Activated T-helper 1 cell treated with anti-CD3 and anti-CD28 coated beads, Interleukin-12 subunit alpha, Interleukin-12 subunit beta, Interleukin-2, Interleukin-4 antibody, amounts not matched to agents 30 ng/mL and 10 ng/mL and 1 ng/mL, durations not matched to agents 14 hours and 24 hours and 36 hours (primary cell): ENCODE measurements at regions of chr20 and their contacts with region 1.

Region 1: GRCh38 chr20:32091888-32092346 is 17.6 kb upstream of the TM9SF4 start:
- DNase-seq: peak; percentile 57
- H3K4me3 Mint-ChIP-seq: no peak overlapping the region
- H3K27ac Mint-ChIP-seq: no peak overlapping the region
- H3K4me1 Mint-ChIP-seq: no peaks in the 10 kb centered on the region
- H3K27me3 Mint-ChIP-seq: peaks cover 22% of the 10 kb centered on the region

Region 2: DNA sequence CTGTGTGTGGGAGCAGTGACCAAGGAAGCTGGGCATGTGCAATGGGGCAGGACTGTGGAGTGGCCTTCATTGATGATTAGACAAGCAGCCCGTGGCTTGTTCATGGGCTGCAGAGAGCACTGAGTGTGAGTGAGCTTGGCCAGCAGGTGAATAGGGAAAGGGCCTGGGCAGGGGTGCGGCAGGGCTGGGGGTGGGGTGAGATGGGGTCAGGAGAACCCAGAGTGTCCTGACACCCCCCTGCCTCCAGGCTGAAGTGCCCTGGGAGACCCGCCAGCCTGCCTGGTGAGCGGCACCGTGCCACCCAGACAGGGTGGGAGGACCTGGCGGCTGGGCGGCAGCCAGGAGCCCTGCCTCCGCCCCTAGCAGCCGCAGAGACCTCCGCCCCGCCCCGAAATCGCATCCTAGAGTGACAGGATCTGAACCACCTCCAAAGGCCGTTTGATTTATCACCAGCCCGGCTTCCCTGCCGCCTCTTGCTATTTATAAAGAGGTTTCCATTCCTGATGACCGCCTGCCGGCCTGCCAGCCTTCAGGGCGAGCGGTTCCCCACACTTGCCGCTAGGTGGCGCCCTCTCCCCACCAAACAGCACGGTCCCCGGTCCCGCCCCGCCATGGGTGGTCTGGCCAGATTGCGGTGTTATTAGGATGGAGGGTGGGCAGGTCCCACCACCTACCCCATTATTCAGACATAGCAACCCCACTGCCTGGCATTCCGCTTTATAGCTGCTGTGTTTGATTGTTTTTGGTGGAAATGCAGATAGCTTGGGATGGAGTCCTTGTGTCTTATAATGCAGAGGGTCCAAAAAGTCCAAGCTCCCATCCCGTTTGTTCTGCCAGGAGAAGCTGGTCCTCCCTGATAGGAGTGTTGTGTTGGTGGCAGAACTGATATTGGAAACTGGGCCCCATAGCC is 269.2 kb before region 1 on chr20:
- intact Hi-C with region 1: loop called (anchors 1 kb)
- DNase-seq: peak; percentile 58
- H3K4me3 Mint-ChIP-seq: no peak overlapping the region
- H3K27ac Mint-ChIP-seq: no peak overlapping the region
- H3K4me1 Mint-ChIP-seq: no peaks in the 10 kb centered on the region
- H3K27me3 Mint-ChIP-seq: peaks cover 1% of the 10 kb centered on the region

Region 3: DNA sequence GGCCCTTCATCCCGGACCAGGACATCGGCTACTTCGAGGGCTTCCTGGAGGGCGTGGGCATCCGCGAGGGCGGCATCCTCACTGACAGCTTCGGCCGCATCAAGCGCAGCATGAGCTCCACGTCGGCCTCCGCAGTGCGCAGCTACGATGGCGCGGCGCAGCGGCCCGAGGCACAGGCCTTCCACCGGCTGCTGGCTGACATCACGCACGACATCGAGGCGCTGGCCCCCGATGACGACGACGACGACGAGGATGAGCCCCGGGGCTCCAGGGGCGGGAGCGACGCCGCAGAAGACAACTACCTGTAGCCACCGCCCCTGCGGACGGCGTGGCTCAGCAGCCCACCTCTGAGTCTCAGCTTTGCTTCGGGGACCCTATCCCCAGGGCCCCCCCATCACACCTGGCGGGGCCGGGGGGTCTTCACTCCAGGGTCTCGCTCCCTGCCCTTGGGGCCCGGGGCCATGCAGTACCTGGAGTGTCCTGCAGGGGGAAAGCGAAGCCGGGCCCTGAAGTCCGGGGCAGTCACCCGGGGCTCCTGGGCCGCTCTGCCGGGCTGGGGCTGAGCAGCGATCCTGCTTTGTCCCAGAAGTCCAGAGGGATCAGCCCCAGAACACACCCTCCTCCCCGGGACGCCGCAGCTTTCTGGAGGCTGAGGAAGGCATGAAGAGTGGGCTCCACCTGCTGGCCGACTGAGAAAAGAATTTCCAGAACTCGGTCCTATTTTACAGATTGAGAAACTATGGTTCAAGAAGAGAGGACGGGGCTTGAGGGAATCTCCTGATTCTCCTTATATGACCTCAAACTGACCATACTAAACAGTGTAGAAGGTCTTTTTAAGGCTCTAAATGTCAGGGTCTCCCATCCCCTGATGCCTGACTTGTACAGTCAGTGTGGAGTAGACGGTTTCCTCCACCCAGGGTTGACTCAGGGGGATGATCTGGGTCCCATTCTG is 60.6 kb before region 1 on chr20:
- intact Hi-C with region 1: loop called (anchors 1 kb)
- DNase-seq: peak; percentile 22
- H3K4me3 Mint-ChIP-seq: no peak overlapping the region
- H3K27ac Mint-ChIP-seq: no peak overlapping the region
- H3K4me1 Mint-ChIP-seq: no peaks in the 10 kb centered on the region
- H3K27me3 Mint-ChIP-seq: peaks cover 48% of the 10 kb centered on the region